ENCODE measurements at regions of chr2 and their contacts with region 1.

Region 1: GRCh38 chr2:99337113-99338028 is at the start of gene EIF5B:
- DNase-seq: peak; percentile 98
- H3K4me3 Mint-ChIP-seq: no peak within 1 kb of the TSS
- H3K27ac Mint-ChIP-seq: no peak within 1 kb of the TSS
- H3K4me1 Mint-ChIP-seq: peaks cover 36% of the 10 kb centered on the region
- H3K27me3 Mint-ChIP-seq: no peaks in the 10 kb centered on the region
- total RNA-seq, gene EIF5B: 86.5 and 88.5 TPM in 2 replicates

Region 2: GRCh38 chr2:97663965-97664635 is 1673.3 kb before region 1 on chr2 and contains the start of gene ACTR1B:
- intact Hi-C with region 1: loop called (anchors 10 kb)
- DNase-seq: peak; percentile 99
- H3K4me3 Mint-ChIP-seq: peak within 1 kb of the TSS; percentile 94
- H3K27ac Mint-ChIP-seq: peak within 1 kb of the TSS; percentile 98
- H3K4me1 Mint-ChIP-seq: peaks cover 30% of the 10 kb centered on the region
- H3K27me3 Mint-ChIP-seq: no peaks in the 10 kb centered on the region
- total RNA-seq, gene ACTR1B: 122 TPM in 2 replicates

Region 3: DNA sequence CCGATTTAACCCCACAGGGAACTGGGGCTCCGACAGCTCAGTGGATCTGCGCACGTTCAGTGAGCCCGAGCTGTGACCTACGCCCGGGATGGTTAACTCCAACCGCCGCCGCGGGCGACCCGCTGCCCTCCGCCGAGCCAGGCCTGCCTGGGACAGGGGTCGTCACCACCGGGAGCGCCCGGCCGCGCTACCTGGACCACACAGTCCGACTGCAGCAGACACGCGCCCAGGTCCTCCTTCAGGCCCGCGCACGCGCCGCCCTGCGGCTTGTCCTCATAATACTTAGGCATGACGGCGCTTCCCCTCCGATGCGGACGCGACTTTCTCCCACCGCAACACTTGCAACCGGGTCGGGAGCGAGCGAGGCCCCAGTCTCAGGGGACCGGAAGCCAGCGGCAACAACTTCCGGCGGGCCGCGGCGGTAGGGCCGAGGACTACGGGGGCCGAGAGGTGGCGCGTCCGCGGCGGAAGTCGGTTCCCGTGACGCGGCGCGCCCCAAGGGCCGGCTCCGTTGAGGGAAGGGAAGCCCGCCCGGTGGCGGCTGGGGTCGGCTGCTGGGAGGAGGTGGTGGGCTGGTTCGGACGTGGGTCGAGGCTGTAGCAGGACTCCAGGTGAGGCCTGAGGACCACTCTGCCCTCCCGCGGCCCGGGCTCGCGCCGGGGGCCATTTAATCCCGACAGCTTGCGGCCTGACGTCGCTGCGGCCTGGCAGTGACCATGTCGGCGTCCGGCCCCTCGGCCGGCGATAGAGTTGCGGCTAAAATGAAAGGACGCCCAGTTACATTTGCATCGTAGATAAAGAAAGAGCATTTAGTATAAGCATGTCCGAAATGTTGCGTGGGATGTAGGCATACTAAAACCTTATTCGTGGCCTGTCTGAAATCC is 729.0 kb before region 1 on chr2 and contains the starts of genes COA5 and UNC50:
- intact Hi-C with region 1: loop called (anchors 1 kb)
- DNase-seq: peak; percentile 98
- H3K4me3 Mint-ChIP-seq: peak within 1 kb of the TSS; percentile 90
- H3K27ac Mint-ChIP-seq: peak within 1 kb of the TSS; percentile 95
- H3K4me1 Mint-ChIP-seq: peaks cover 50% of the 10 kb centered on the region
- H3K27me3 Mint-ChIP-seq: no peaks in the 10 kb centered on the region
- total RNA-seq, gene COA5: 20.4 and 22.0 TPM in 2 replicates
- total RNA-seq, gene UNC50: 38.5 and 39.0 TPM in 2 replicates

Region 4: GRCh38 chr2:98658816-98659490 is 678.4 kb before region 1 on chr2:
- intact Hi-C with region 1: loop called (anchors 2 kb)
- DNase-seq: peak; percentile 77
- H3K4me3 Mint-ChIP-seq: peak overlapping the region; percentile 82
- H3K27ac Mint-ChIP-seq: peak overlapping the region; percentile 95
- H3K4me1 Mint-ChIP-seq: peaks cover 65% of the 10 kb centered on the region
- H3K27me3 Mint-ChIP-seq: no peaks in the 10 kb centered on the region

Region 5: DNA sequence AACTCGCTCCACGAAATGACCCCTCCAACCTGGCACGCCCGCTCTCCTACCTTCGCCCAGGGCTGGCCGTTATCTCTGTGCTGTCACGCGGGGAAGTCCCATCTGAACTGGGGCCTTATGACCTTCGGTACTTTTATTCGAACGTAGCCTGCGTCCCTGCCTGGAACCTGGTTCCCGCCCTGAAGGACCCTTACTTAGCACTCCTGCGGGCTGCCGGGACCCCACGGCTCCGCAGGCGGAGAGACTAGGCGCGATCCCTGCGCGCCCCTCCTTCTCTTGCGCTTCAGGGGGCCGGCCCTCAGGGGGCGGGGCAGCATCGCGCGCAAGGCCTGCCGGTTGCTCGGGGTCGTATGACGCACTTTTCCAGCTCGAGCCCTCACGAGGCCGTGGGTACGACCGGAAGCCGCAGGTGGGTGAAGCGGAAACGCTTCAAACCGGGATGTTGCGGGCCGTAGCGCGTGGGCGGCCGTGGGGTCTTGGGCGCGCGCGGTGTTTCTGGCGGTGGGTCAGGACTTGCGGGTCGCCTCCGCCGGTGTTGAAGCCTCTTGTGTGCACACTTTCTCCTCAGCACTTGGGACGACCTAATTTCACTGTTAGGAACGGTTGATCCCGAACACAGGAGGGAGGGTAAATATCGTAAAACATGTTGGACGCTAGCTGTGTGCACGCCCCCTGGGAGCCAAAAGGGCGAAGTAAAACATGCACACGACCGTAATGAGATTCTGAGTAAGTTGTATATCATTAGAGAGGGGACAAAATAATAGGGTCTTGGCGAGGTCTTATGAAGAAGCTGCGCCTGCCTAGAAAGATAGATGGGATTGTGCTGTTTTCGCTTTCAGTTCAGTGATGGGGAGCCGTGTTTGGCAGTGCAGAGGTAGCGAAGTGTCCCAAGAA is 182.5 kb before region 1 on chr2 and contains the starts of genes LIPT1 and TSGA10:
- intact Hi-C with region 1: loop called (anchors 1 kb)
- DNase-seq: peak; percentile 98
- H3K4me3 Mint-ChIP-seq: no peak within 1 kb of the TSS
- H3K27ac Mint-ChIP-seq: peak within 1 kb of the TSS; percentile 83
- H3K4me1 Mint-ChIP-seq: peaks cover 35% of the 10 kb centered on the region
- H3K27me3 Mint-ChIP-seq: no peaks in the 10 kb centered on the region
- total RNA-seq, gene LIPT1: 3.3 and 3.9 TPM in 2 replicates
- total RNA-seq, gene TSGA10: 3.2 and 3.7 TPM in 2 replicates

Region 6: GRCh38 chr2:99348173-99348572 is 10.8 kb after region 1 on chr2:
- intact Hi-C with region 1: loop called (anchors 1 kb)
- DNase-seq: no peak
- H3K4me3 Mint-ChIP-seq: peak overlapping the region; percentile 26
- H3K27ac Mint-ChIP-seq: peak overlapping the region; percentile 20
- H3K4me1 Mint-ChIP-seq: peaks cover 34% of the 10 kb centered on the region
- H3K27me3 Mint-ChIP-seq: no peaks in the 10 kb centered on the region

Region 7: GRCh38 chr2:99489761-99490622 is 152.6 kb after region 1 on chr2 and contains the start of gene REV1:
- intact Hi-C with region 1: loop called (anchors 1 kb)
- DNase-seq: peak; percentile 97
- H3K4me3 Mint-ChIP-seq: peak within 1 kb of the TSS; percentile 92
- H3K27ac Mint-ChIP-seq: peak within 1 kb of the TSS; percentile 95
- H3K4me1 Mint-ChIP-seq: peaks cover 25% of the 10 kb centered on the region
- H3K27me3 Mint-ChIP-seq: no peaks in the 10 kb centered on the region
- total RNA-seq, gene REV1: 47.8 and 48.9 TPM in 2 replicates